ENCODE measurements at regions of chr9 and their contacts with region 1.

Region 1: GRCh38 chr9:126743041-126743440 is 61.8 kb upstream of the ZBTB43 start:
- DNase-seq: no peak
- H3K4me3 ChIP-seq: no peak overlapping the region
- CTCF ChIP-seq: no peak

Region 2: GRCh38 chr9:126676685-126677143 is 66.3 kb before region 1 on chr9:
- in situ Hi-C with region 1: loop called (anchors 5 kb)
- DNase-seq: no peak
- H3K4me3 ChIP-seq: no peak overlapping the region
- CTCF ChIP-seq: no peak

Region 3: DNA sequence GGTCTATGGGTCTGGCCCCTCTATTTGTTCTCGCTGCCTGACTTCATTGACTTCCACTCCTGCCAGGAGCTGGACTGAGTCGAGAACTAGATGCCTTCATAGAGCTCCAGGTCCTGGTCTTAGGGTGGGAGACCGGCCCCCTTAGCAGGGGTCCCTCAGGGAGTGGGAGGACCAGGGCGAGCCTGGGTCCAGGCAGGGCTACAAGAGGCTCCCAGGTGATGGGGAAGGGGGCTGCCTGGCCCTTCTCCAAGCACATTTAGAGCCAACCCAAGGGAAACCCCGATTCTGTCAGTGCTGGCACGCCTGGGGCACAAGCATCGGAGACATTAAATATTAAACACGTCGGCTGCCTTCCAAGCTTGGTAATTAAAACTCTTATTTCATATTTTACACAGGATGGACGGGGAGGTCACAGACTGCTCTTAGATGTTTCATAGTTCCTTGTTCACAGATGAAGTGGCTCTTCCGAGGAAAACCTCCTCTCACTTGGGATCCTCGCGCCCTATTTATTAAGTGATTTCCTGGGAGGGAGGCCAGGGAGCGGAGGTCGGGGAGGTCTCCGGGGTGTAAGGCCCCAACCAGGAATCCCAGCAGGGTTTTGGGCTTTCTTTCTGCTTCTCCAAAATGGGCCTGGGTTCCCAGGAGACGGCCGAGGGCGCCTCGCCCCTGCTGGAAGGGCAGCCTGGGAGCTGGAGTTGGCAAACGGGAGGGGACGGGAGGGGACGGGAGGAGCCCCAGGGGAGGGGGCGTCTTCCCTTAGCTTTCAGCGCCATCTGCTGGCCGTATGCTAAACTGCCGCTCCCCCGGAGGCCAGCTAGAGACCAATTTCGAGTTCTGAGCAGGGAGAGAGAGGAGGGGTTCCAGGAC is 38.4 kb after region 1 on chr9:
- in situ Hi-C with region 1: no loop called
- DNase-seq: peak; percentile 48
- H3K4me3 ChIP-seq: peak overlapping the region; percentile 4
- CTCF ChIP-seq: peak; percentile 91

Measured in astrocyte of the cerebellum (primary cell).